GM10248 (cell line): ENCODE measurements at regions of chr11 and their contacts with region 1.

Region 1: DNA sequence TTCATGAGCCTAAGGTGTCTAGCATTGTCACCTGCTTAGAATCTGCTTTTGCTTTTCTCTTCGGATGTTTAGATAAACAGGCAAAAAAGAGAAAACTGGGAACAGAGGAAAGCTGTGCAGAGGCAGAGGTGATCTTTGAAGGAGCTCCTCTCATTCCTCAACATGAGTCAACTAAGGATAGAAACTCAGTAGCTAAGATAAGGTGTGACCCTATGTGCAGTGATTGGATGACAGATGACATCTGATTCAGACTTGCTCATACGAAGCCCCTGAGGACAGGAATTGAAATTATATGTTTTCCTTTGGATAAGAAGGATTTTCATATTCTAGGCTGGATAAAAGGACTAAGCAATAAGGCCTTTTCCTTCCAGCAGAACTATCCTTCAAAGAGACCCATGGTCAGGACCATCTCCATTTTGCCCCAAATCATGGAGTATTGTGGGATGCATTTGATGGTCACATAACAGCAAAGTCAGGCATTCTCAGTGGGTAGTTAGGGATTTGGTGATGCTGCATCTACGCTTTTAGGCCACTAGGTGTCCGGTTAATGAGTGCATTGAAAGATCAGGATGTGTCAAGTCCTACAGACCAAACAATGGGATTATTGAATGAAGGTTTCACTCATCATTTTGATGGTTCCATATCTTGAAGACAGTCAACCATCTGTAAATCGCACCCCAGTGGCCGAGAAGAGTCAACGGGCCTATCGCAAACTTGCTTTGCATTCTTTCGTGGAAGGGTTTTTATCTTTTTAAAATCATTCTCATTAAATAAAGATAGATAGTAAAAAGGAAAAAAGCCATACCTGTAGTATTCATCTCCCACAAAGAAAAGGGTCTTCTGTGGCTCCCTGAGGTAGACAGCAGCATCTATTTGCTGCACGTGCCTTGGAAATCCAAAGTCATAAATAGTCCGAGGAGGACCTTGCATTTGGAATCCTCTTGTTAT is 32.2 kb downstream of the MMP20 start:
- DNase-seq: no peak
- CTCF ChIP-seq: peak; percentile 13

Region 2: DNA sequence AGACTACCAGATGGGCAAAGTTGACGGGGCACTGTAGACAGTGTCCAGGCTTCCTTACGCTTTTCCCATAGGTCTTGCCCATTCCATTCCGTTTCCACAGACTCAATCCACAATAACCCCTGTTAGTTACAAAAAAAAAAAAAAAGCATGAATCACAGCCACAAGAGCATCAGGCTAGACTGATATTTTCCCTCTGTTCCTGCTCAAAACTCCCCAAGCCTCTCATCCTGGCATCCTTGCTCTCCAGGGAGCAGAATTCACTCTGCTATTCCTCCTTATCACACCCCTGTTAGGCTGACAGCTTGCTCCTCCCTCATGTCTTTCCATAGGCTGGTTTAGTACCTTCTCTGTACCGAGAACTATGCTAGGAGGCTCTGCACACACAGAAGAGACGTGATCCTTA is 182.5 kb before region 1 on chr11:
- CTCF ChIA-PET with region 1: no interaction called
- POLR2A ChIA-PET with region 1: no interaction called
- DNase-seq: no peak
- CTCF ChIP-seq: no peak

Region 3: GRCh38 chr11:102553835-102554282 is 39.0 kb before region 1 on chr11:
- CTCF ChIA-PET with region 1: interaction called, 30 read pairs
- POLR2A ChIA-PET with region 1: no interaction called
- DNase-seq: peak; percentile 26
- CTCF ChIP-seq: no peak

Region 4: GRCh38 chr11:102620818-102621561 is 28.1 kb after region 1 on chr11:
- CTCF ChIA-PET with region 1: no interaction called
- POLR2A ChIA-PET with region 1: no interaction called
- DNase-seq: no peak
- CTCF ChIP-seq: no peak